Mammary epithelial cell (primary cell): ENCODE measurements at regions of chr18 and their contacts with region 1.

Region 1: DNA sequence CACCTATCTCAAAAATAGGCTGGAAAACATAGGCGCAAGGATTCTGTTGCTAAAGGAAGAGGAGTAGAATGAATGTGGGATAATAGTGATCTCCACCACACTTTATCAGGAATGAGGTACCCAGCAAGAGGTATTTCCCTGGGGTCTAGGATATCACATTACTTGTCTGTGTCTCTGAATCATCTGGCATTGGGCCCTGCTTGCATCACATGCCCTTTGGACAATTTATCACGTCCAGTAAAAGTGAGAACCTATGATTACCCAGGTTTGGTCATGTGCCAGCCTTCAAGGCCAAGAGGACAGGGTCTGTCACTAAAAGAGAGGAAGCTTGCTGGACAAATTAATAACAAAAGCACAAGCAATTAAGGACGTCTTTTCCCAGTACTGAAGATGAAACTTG is 11.4 kb upstream of the TRAPPC8 start:
- DNase-seq: no peak
- H3K4me3 ChIP-seq: no peak overlapping the region
- H3K27ac ChIP-seq: no peak overlapping the region
- H3K4me1 ChIP-seq: no peaks in the 10 kb centered on the region
- H3K27me3 ChIP-seq: no peaks in the 10 kb centered on the region
- CTCF ChIP-seq: no peak

Region 2: GRCh38 chr18:31741097-31741735 is 213.1 kb before region 1 on chr18:
- CTCF ChIA-PET with region 1: no interaction called
- dilution Hi-C with region 1: no loop called
- in situ Hi-C with region 1: loop called in 1 of 2 experiments (anchors 25 kb)
- intact Hi-C with region 1: loop called (anchors 2 kb)
- DNase-seq: peak; percentile 12
- H3K4me3 ChIP-seq: no peak overlapping the region
- H3K27ac ChIP-seq: no peak overlapping the region
- H3K4me1 ChIP-seq: no peaks in the 10 kb centered on the region
- H3K27me3 ChIP-seq: no peaks in the 10 kb centered on the region
- CTCF ChIP-seq: peak; percentile 75 to 82

Region 3: GRCh38 chr18:31819106-31819924 is 135.0 kb before region 1 on chr18:
- CTCF ChIA-PET with region 1: no interaction called
- dilution Hi-C with region 1: no loop called
- in situ Hi-C with region 1: no loop called
- intact Hi-C with region 1: loop called (anchors 5 kb)
- DNase-seq: peak; percentile 37
- H3K4me3 ChIP-seq: no peak overlapping the region
- H3K27ac ChIP-seq: no peak overlapping the region
- H3K4me1 ChIP-seq: no peaks in the 10 kb centered on the region
- H3K27me3 ChIP-seq: no peaks in the 10 kb centered on the region
- CTCF ChIP-seq: peak; percentile 72 to 89

Region 4: GRCh38 chr18:31840499-31840898 is 113.8 kb before region 1 on chr18:
- CTCF ChIA-PET with region 1: no interaction called
- dilution Hi-C with region 1: no loop called
- in situ Hi-C with region 1: no loop called
- intact Hi-C with region 1: loop called (anchors 10 kb)
- DNase-seq: no peak
- H3K4me3 ChIP-seq: no peak overlapping the region
- H3K27ac ChIP-seq: no peak overlapping the region
- H3K4me1 ChIP-seq: no peaks in the 10 kb centered on the region
- H3K27me3 ChIP-seq: no peaks in the 10 kb centered on the region
- CTCF ChIP-seq: no peak

Region 5: GRCh38 chr18:31857526-31858106 is 96.7 kb before region 1 on chr18:
- CTCF ChIA-PET with region 1: no interaction called
- dilution Hi-C with region 1: no loop called
- in situ Hi-C with region 1: no loop called
- intact Hi-C with region 1: no loop called
- DNase-seq: no peak
- H3K4me3 ChIP-seq: no peak overlapping the region
- H3K27ac ChIP-seq: no peak overlapping the region
- H3K4me1 ChIP-seq: no peaks in the 10 kb centered on the region
- H3K27me3 ChIP-seq: no peaks in the 10 kb centered on the region
- CTCF ChIP-seq: no peak

Region 6: DNA sequence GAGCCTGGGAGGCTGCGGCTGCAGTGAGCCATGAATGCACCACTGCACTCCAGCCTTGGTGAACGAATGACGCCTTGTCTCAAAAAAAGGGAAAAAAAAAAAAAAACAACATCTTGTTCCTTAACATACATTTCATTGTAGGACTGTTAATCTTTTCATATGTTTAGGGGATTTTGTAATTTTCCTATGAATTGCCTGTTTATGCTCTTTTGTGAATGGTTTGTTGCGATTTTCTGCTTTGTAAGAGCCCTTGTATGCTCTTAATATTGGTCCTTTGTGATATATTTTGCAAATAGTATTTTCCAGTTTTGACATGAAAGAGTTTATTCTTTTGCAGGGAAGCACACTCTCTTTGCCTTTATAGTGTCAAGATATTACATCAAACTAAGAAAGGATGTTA is 61.4 kb before region 1 on chr18:
- CTCF ChIA-PET with region 1: no interaction called
- dilution Hi-C with region 1: no loop called
- in situ Hi-C with region 1: loop called in 1 of 2 experiments (anchors 10 kb)
- intact Hi-C with region 1: loop called (anchors 5 kb)
- DNase-seq: no peak
- H3K4me3 ChIP-seq: no peak overlapping the region
- H3K27ac ChIP-seq: no peak overlapping the region
- H3K4me1 ChIP-seq: no peaks in the 10 kb centered on the region
- H3K27me3 ChIP-seq: no peaks in the 10 kb centered on the region
- CTCF ChIP-seq: no peak

Region 7: GRCh38 chr18:31942999-31943865 is 11.1 kb before region 1 on chr18 and contains the start of gene TRAPPC8:
- CTCF ChIA-PET with region 1: no interaction called
- dilution Hi-C with region 1: no loop called
- in situ Hi-C with region 1: no loop called
- intact Hi-C with region 1: loop called (anchors 1 kb)
- DNase-seq: peak; percentile 97
- H3K4me3 ChIP-seq: peak within 1 kb of the TSS; percentile 83 to 98 (median 94)
- H3K27ac ChIP-seq: peak within 1 kb of the TSS; percentile 82
- H3K4me1 ChIP-seq: peaks cover 11% of the 10 kb centered on the region
- H3K27me3 ChIP-seq: no peaks in the 10 kb centered on the region
- CTCF ChIP-seq: peak in 1 of 2 donors; percentile 31
- total RNA-seq, gene TRAPPC8: 25.0 to 35.8 TPM

Region 8: DNA sequence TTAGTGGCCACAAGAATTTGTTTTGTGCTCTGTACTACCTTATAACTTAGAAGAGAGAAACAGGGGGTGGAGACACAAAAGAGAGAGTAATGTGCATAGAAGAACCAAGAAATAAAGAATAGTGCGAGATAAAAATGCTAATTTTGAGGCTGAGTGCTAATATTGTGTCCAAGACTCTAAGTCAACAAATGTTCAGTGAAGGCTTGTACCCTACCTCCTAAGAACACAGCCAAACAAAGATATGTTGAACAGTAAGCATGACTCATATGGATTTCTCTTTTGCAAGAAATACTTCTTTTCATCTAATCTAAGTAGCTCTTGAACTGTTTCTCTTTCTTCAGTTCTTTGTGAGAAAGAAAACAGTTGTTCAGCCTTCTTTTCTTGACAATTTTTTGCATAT is 471.1 kb after region 1 on chr18:
- CTCF ChIA-PET with region 1: no interaction called
- dilution Hi-C with region 1: no loop called
- in situ Hi-C with region 1: no loop called
- intact Hi-C with region 1: no loop called
- DNase-seq: peak; percentile 32
- H3K4me3 ChIP-seq: no peak overlapping the region
- H3K27ac ChIP-seq: no peak overlapping the region
- H3K4me1 ChIP-seq: no peaks in the 10 kb centered on the region
- H3K27me3 ChIP-seq: no peaks in the 10 kb centered on the region
- CTCF ChIP-seq: no peak